ENCODE measurements at regions of chr7 and their contacts with region 1.

Region 1: DNA sequence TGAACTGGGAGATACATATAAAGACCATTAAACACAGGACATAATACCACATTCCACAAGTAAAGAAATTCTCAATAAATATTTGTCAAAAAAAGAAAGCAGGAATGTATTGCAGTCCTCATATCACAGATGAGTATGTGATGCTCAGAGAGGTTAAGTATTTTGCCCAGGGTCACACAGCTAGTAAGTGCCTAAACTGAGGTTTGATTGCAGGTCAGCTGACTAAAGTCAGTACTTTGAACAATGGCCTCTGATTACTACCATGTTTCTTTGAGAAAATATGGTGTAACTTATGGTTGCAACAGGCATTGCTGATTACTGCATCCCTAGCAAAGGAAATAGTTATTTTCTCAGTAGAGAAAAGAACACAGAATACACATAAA is 267.1 kb downstream of the ELMO1 start:
- H3K4me3 ChIP-seq: no peak overlapping the region
- H3K27ac ChIP-seq: no peak overlapping the region
- H3K4me1 ChIP-seq: no peaks in the 10 kb centered on the region
- CTCF ChIP-seq: no peak

Region 2: DNA sequence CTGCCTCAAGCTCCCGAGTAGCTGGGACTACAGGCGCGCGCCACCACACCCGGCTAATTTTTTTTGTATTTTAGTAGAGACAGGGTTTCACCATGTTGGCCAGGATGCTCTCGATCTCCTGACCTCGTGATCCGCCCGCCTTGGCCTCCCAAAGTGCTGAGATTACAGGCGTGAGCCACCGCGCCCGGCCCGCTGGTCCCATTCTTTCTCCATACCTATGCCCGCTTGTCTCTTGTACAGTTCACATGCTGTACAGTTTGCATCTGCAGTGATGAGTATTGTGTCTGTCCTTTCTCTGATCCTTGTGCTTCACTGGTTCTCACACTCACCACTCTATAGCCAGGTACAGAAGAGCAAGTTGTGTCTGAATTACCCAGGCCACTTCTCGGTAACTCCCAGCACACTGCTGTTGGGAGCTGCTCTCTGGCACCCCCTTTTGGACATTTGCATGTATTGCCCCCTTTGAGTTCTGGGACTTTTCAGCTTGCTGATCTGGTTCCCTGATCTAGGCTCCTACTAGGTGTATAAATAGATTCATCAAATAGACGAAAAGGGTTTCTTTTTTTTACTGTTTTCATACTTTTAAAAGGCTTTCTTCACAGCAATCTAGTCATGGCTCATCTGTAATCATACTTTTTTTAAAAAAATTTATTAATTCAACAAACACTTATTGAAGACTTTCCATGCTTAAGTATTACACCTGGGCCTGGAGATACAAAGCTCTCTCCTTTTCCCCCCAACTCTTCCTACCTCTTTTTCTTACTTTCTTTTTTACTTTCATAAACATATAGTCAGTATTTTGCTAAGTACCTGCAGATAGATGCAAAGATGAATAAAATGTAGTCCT is 510.7 kb before region 1 on chr7:
- CTCF ChIA-PET with region 1: interaction called, 14 read pairs
- POLR2A ChIA-PET with region 1: no interaction called
- H3K4me3 ChIP-seq: no peak overlapping the region
- H3K27ac ChIP-seq: no peak overlapping the region
- H3K4me1 ChIP-seq: no peaks in the 10 kb centered on the region
- CTCF ChIP-seq: 0 out of 2 replicates have a peak, but pooled peaks have one; percentile 32

Region 3: GRCh38 chr7:36986429-36987362 is 194.8 kb before region 1 on chr7:
- CTCF ChIA-PET with region 1: interaction called, 61 read pairs
- POLR2A ChIA-PET with region 1: no interaction called
- H3K4me3 ChIP-seq: no peak overlapping the region
- H3K27ac ChIP-seq: no peak overlapping the region
- H3K4me1 ChIP-seq: peaks cover 3% of the 10 kb centered on the region; the same call in 1 of the 2 replicates
- CTCF ChIP-seq: peak; percentile 42; the same call in 1 of the 2 replicates

Region 4: DNA sequence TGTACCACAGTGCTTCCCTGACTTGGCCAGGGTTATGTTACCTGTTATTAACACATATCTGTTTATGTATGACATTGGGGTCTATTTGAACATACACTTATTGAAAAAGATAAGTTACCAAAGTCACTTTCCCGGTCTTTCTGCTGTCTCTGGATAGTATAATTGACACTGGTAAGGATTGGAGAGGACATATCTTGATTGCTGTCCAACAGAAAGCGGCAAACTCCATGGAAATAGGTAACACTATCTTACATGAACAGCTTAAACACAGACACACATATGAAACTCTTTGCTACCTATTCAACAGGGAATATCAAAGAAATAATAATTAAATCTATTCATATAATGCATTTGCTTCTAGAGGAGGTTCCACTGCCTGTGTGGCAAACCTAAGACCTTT is 174.8 kb before region 1 on chr7:
- CTCF ChIA-PET with region 1: interaction called, 12 read pairs
- POLR2A ChIA-PET with region 1: no interaction called
- H3K4me3 ChIP-seq: no peak overlapping the region
- H3K27ac ChIP-seq: no peak overlapping the region
- H3K4me1 ChIP-seq: no peaks in the 10 kb centered on the region
- CTCF ChIP-seq: no peak

Region 5: GRCh38 chr7:37201003-37201875 is 19.7 kb after region 1 on chr7:
- CTCF ChIA-PET with region 1: interaction called, 86 read pairs
- POLR2A ChIA-PET with region 1: no interaction called
- H3K4me3 ChIP-seq: no peak overlapping the region
- H3K27ac ChIP-seq: no peak overlapping the region
- H3K4me1 ChIP-seq: no peaks in the 10 kb centered on the region
- CTCF ChIP-seq: peak; percentile 35; the same call in 1 of the 2 replicates